IMR-90 (cell line): ENCODE measurements at regions of chr6 and their contacts with region 1.

Region 1: DNA sequence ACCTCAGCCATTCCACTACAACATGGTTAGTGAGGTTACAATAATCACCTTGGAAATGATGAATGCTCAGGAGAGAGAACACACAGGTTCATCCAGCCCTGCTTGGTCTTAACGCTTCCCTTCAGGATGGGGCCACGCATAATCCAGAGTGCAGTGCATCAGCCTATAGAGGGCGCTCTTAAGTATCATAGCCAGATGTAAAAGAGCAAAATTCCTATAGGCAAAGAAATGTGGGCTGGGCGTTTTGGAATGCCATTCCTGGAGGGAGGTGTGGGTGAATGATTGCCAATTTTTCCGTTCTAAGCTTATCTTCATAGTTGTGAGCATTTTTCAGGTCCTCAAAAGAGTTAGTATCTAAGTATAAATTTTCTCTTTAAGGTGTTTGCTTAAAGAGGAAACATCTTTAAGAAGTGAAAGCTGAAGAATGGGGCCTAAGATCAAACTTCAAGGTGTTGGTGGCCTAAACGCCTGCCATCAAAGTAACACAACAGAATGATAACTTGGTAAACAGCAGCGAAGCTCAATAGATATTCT is 1.8 kb downstream of the RIPOR2 start:
- DNase-seq: no peak
- ATAC-seq: no peak
- H3K4me3 ChIP-seq: no peak overlapping the region
- H3K27ac ChIP-seq: no peak overlapping the region
- H3K4me1 ChIP-seq: peaks cover 23% of the 10 kb centered on the region
- H3K27me3 ChIP-seq: no peaks in the 10 kb centered on the region
- CTCF ChIP-seq: 0 out of 2 replicates have a peak, but pooled peaks have one; percentile 14
- POLR2A ChIP-seq: no peak
- RAD21 ChIP-seq: no peak

Region 2: DNA sequence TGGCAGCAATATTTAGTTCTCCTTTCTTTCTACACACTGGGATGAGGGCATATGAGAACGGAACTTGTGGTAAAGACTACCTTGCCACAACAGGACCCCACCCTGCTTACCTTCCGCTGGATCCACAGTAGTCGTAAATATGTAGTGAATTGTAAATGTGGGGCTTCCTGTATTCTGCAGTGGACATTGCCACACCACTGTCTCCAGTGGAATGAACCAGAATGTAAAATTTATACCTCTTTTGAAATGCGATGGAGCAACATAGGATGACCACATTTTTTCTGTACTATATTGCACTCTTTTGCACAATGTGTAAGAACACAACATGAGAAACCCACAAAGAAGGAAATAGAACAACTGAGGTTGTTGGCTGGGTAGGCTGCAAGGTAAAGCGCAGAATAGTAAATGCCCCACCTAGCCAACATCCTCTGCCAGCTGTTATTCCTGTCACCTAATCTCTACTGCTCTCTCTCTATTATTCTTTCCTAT is 17.9 kb after region 1 on chr6:
- CTCF ChIA-PET with region 1: interaction called, 3 read pairs
- POLR2A ChIA-PET with region 1: no interaction called
- dilution Hi-C with region 1: no loop called
- in situ Hi-C with region 1: no loop called
- intact Hi-C with region 1: loop called (anchors 2 kb)
- DNase-seq: no peak
- ATAC-seq: no peak
- H3K4me3 ChIP-seq: no peak overlapping the region
- H3K27ac ChIP-seq: no peak overlapping the region
- H3K4me1 ChIP-seq: peaks cover 4% of the 10 kb centered on the region; the same call in 1 of the 2 replicates
- H3K27me3 ChIP-seq: peaks cover 1% of the 10 kb centered on the region; the same call in 1 of the 2 replicates
- CTCF ChIP-seq: no peak
- POLR2A ChIP-seq: no peak
- RAD21 ChIP-seq: no peak

Region 3: DNA sequence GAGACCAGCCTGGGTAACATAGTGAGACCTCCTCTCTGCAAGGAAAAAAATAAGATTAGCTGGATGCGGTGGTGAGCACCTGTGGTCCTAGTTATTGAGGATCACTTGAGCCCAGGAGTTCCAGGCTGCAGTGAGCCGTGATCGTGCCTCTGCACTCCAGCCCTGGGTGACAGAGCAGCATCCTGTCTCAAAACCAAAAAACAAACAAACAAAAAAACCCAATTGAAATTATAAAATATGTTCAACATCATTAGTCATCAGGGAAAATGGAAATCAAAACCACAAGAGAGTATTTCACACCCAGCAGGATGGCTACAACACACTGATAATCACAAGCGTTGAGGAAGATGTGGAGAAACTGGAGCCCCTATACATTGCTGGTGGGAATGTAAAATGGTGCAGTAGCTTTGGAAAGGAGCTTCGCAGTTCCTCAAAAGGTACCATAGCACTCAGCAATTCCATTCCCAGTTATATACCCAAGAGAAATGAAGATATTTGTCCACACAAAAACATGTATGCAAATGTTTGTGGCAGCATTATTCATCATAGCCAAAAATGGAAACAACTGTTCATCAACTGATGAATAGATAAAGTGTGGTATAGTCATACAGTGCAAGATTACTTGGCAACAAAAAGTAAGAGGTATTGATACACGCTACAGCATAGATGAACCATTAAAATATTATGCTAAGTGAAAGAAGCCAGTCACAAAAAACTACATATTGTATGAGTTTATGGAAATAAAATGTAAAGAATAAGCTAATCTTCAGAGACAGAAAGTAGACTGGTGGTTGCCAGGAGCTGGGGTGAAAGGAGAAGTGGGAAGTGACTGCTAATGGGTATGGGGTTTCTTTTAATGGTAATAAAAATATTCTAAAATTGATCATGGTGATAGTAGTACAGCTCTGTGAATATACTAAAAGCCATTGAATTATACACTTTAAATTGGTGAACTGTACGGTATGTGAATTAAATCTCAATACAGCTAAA is 40.5 kb after region 1 on chr6:
- CTCF ChIA-PET with region 1: no interaction called
- POLR2A ChIA-PET with region 1: no interaction called
- dilution Hi-C with region 1: no loop called
- in situ Hi-C with region 1: no loop called
- intact Hi-C with region 1: loop called (anchors 1 kb)
- DNase-seq: no peak
- ATAC-seq: no peak
- H3K4me3 ChIP-seq: no peak overlapping the region
- H3K27ac ChIP-seq: no peak overlapping the region
- H3K4me1 ChIP-seq: no peaks in the 10 kb centered on the region
- H3K27me3 ChIP-seq: no peaks in the 10 kb centered on the region
- CTCF ChIP-seq: no peak
- POLR2A ChIP-seq: no peak
- RAD21 ChIP-seq: no peak

Region 4: DNA sequence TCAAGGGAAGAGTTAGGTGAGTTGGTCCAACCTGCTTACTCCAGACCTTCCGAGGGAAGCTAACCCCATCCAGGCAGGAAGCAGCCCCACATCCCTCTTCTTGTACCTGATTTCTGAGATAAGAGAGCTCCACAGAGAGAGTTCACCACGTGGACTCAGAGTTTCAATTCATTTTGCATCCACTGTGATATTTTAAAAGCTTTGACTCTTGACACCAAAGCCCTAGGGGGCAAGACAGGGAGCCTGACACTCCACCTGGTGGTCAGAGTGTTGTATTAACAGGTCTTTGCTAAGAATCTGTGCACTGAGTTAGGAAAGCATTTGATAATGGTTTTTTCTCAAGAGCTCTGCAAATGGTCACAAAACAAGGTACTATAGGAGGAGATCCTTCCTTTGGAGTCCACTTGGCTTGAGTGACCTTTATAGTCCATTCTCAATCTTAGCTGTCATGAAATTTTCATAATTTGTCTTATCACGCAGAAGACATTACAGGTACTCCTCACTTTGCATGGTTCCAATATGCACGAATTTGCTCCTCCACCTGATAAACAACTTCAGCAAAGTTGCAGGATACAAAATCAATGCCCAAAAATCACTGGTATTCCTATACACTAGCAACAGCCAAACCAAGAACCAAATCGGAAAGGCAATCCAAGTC is 58.0 kb after region 1 on chr6:
- CTCF ChIA-PET with region 1: no interaction called
- POLR2A ChIA-PET with region 1: no interaction called
- dilution Hi-C with region 1: no loop called
- in situ Hi-C with region 1: no loop called
- intact Hi-C with region 1: loop called (anchors 2 kb)
- DNase-seq: peak; percentile 48
- ATAC-seq: peak; percentile 74
- H3K4me3 ChIP-seq: no peak overlapping the region
- H3K27ac ChIP-seq: no peak overlapping the region
- H3K4me1 ChIP-seq: peaks cover 3% of the 10 kb centered on the region
- H3K27me3 ChIP-seq: no peaks in the 10 kb centered on the region
- CTCF ChIP-seq: peak; percentile 65
- POLR2A ChIP-seq: no peak
- RAD21 ChIP-seq: peak; percentile 69

Region 5: GRCh38 chr6:25053875-25054371 is 120.0 kb after region 1 on chr6:
- CTCF ChIA-PET with region 1: no interaction called
- POLR2A ChIA-PET with region 1: no interaction called
- dilution Hi-C with region 1: no loop called
- in situ Hi-C with region 1: no loop called
- intact Hi-C with region 1: loop called (anchors 2 kb)
- DNase-seq: peak; percentile 88
- ATAC-seq: peak; percentile 86
- H3K4me3 ChIP-seq: no peak overlapping the region
- H3K27ac ChIP-seq: peak overlapping the region; percentile 74
- H3K4me1 ChIP-seq: peaks cover 36% of the 10 kb centered on the region
- H3K27me3 ChIP-seq: no peaks in the 10 kb centered on the region
- CTCF ChIP-seq: no peak
- POLR2A ChIP-seq: no peak
- RAD21 ChIP-seq: no peak

Region 6: DNA sequence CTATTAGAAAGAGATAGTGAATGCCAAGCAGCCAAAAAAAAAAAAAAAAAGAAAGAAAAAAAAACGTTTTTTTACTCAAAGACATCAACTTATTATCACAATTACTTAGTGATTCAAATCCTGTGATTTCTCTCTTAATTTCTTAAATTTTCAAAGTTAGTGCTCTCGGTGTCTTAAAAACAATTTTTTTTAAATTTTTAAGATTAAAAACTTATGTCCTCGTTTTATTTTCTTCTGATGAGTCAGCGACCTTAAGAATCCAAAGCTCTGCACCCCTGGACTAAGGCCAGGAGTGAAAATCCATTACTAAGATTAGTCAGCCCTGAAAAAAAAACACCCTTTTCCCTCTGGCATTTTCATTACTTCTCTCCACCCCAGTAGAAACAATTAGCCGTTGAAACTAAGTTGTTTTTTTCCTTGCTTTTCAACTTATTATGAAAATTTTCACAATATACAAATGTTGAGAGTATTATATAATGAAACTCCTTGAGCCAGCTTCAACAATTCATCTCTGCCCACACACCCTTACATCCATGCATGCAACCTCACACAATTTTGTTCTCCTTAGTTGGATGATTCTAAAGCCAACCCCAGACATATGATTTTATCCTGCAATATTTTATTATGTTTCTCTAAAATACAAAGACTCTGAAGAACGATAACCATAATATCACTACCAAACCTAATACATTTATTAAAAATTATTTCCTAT is 259.7 kb after region 1 on chr6:
- CTCF ChIA-PET with region 1: no interaction called
- POLR2A ChIA-PET with region 1: no interaction called
- dilution Hi-C with region 1: no loop called
- in situ Hi-C with region 1: no loop called
- intact Hi-C with region 1: no loop called
- DNase-seq: peak; percentile 95
- ATAC-seq: peak; percentile 77
- H3K4me3 ChIP-seq: no peak overlapping the region
- H3K27ac ChIP-seq: peak overlapping the region; percentile 92; the same call in 1 of the 2 replicates
- H3K4me1 ChIP-seq: peaks cover 8% of the 10 kb centered on the region
- H3K27me3 ChIP-seq: no peaks in the 10 kb centered on the region
- CTCF ChIP-seq: no peak
- POLR2A ChIP-seq: no peak
- RAD21 ChIP-seq: no peak